Natural killer cell (primary cell): ENCODE measurements at regions of chr20 and their contacts with region 1.

Region 1: DNA sequence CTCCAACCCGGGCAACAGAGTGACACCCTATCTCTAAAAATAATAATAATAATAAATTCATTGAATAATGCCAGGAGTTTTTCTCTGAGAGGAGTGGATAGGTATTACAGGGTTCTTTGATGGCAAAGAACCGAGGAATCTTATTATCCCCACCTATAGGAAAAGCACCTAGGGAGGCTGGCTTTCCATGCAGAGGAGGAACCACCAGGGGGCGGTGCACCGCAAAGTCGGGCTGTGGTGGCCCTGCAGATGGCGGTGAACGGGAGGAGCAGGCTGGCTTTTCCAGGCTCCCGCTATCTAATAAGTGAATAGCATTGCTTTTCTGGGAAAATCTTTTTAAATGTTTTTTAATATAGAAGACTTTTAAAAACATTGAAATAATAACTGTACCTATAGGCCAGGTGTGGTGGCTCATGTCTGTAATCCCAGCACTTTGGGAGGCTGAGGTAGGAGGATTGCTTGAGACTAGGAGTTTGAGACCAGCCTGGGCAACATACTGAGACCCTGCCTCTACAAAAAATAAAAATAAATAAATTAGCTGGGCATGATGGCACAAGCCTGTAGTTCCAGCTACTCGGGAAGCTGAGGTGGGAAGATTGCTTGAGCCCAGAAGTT is 864.2 kb downstream of the KIF16B start:
- DNase-seq: peak; percentile 27 to 42
- ATAC-seq: peak in 1 of 3 donors; percentile 61
- H3K4me3 ChIP-seq: no peak overlapping the region
- H3K4me3 Mint-ChIP-seq: no peak overlapping the region
- H3K27ac ChIP-seq: no peak overlapping the region
- H3K27ac Mint-ChIP-seq: no peak overlapping the region
- H3K4me1 ChIP-seq: no peaks in the 10 kb centered on the region
- H3K4me1 Mint-ChIP-seq: no peaks in the 10 kb centered on the region
- H3K27me3 ChIP-seq: no peaks in the 10 kb centered on the region
- H3K27me3 Mint-ChIP-seq: no peaks in the 10 kb centered on the region
- CTCF ChIP-seq: peak; percentile 69

Region 2: GRCh38 chr20:15555913-15556312 is 153.2 kb before region 1 on chr20:
- intact Hi-C with region 1: no loop called
- DNase-seq: no peak
- ATAC-seq: no peak
- H3K4me3 ChIP-seq: no peak overlapping the region
- H3K4me3 Mint-ChIP-seq: no peak overlapping the region
- H3K27ac ChIP-seq: no peak overlapping the region
- H3K27ac Mint-ChIP-seq: no peak overlapping the region
- H3K4me1 ChIP-seq: no peaks in the 10 kb centered on the region
- H3K4me1 Mint-ChIP-seq: no peaks in the 10 kb centered on the region
- H3K27me3 ChIP-seq: no peaks in the 10 kb centered on the region
- H3K27me3 Mint-ChIP-seq: no peaks in the 10 kb centered on the region
- CTCF ChIP-seq: no peak

Region 3: GRCh38 chr20:16241915-16242314 is 532.8 kb after region 1 on chr20:
- intact Hi-C with region 1: loop called (anchors 2 kb)
- DNase-seq: no peak
- ATAC-seq: no peak
- H3K4me3 ChIP-seq: no peak overlapping the region
- H3K4me3 Mint-ChIP-seq: no peak overlapping the region
- H3K27ac ChIP-seq: no peak overlapping the region
- H3K27ac Mint-ChIP-seq: no peak overlapping the region
- H3K4me1 ChIP-seq: no peaks in the 10 kb centered on the region
- H3K4me1 Mint-ChIP-seq: no peaks in the 10 kb centered on the region
- H3K27me3 ChIP-seq: no peaks in the 10 kb centered on the region
- H3K27me3 Mint-ChIP-seq: peaks cover 11 to 14% of the 10 kb centered on the region in 2 donors
- CTCF ChIP-seq: no peak